Activated CD4-positive, alpha-beta T cell treated with anti-CD3 and anti-CD28 coated beads for 36 hours (primary cell): ENCODE measurements at regions of chr22 and their contacts with region 1.

Region 1: DNA sequence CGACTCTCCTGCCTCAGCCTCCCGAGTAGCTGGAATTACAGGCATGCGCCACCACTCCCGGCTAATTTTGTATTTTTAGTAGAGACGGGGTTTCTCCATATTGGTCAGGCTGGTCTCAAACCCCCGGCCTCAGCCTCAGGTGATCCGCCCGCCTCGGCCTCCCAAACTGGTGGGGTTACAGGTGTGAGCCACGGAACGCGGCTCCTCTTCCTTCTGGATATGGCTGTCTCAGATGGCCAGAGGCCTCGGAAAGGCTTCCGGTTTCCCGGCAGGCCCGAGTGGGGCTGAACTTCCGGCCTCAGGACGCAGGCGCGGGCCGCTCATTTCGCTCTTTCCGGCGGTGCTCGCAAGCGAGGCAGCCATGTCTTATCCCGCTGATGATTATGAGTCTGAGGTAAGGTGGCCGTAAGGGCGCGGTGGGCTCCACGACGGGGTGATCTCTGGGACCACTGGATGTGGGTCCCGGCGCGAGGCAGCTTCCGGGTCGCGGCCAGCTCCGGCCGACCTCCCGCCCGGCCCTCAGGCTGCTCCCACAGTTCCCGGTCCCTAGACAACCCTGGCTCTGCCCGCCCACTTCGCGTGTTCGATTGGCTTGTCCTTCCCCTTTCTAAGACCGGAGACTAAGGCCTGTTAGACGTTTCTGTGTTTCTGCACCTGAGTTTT is at the start of gene EIF3L:
- DNase-seq: peak; percentile 94
- ATAC-seq: peak; percentile 74
- H3K4me3 Mint-ChIP-seq: peak within 1 kb of the TSS; percentile 90
- H3K27ac Mint-ChIP-seq: peak within 1 kb of the TSS; percentile 96
- H3K4me1 Mint-ChIP-seq: peaks cover 47% of the 10 kb centered on the region
- H3K27me3 Mint-ChIP-seq: no peaks in the 10 kb centered on the region
- total RNA-seq, gene EIF3L: 632 to 670 TPM

Region 2: GRCh38 chr22:37486224-37486845 is 362.9 kb before region 1 on chr22 and contains the start of gene MFNG:
- CTCF ChIA-PET with region 1: no interaction called
- POLR2A ChIA-PET with region 1: no interaction called
- intact Hi-C with region 1: loop called in 1 of 2 experiments (anchors 2 kb)
- DNase-seq: peak; percentile 89
- ATAC-seq: peak; percentile 70
- H3K4me3 Mint-ChIP-seq: peak within 1 kb of the TSS; percentile 92
- H3K27ac Mint-ChIP-seq: peak within 1 kb of the TSS; percentile 92
- H3K4me1 Mint-ChIP-seq: peaks cover 64% of the 10 kb centered on the region
- H3K27me3 Mint-ChIP-seq: no peaks in the 10 kb centered on the region
- total RNA-seq, gene MFNG: 108 to 125 TPM

Region 3: DNA sequence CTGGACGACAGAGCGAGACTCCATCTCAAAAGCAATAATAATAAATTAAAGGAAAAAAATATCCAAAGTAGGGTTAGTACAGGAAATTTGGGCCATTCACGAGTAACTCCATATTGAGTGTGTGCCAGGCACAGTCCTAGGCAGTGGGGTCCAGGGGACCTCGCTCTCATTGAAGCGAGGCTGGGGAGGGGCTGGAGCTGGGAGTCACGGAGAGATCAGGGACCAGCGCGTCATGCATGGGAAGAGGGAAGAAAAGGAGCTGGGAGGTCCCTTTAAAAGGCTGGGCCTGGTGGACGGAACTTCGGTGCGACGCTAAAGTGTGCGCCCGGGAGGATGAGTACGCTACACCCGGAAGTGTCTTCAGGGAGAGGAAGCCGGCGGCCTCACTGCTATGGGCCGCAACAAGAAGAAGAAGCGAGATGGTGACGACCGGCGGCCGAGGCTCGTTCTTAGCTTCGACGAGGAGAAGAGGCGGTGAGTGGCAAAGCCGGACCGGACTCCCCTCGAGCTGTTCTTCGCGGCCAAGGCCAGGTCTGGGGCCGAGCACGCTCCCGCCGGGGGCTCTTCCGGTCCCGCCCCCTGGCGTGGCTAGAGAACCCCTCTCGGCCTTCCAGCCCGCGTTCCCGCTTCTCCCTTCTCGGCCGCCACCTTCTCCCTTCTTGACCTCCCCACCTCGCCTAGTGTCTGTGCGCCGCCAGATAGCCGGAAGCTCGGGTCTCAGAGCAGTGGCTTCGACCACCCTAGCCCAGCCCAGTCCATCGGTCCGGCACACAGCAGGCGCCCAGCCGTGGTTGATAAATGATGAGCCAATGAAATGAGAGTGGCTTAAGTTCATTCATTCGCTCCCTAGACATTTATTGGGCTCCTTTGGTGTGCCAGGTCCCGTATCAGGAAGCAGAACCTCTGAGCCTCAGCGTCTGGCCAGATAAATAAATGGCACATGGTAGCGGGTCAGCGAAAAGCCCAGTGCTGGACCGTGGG is 162.9 kb before region 1 on chr22 and contains the start of gene NOL12:
- CTCF ChIA-PET with region 1: no interaction called
- POLR2A ChIA-PET with region 1: interaction called, 4 read pairs
- intact Hi-C with region 1: loop called in 1 of 2 experiments (anchors 1 kb)
- DNase-seq: peak; percentile 84
- ATAC-seq: peak; percentile 82
- H3K4me3 Mint-ChIP-seq: peak within 1 kb of the TSS; percentile 90
- H3K27ac Mint-ChIP-seq: peak within 1 kb of the TSS; percentile 98
- H3K4me1 Mint-ChIP-seq: peaks cover 27% of the 10 kb centered on the region
- H3K27me3 Mint-ChIP-seq: no peaks in the 10 kb centered on the region
- total RNA-seq, gene NOL12: 37.1 to 42.3 TPM

Region 4: GRCh38 chr22:37817705-37818408 is 31.4 kb before region 1 on chr22:
- CTCF ChIA-PET with region 1: interaction called, 7 read pairs
- POLR2A ChIA-PET with region 1: interaction called, 9 read pairs
- intact Hi-C with region 1: loop called in 1 of 2 experiments (anchors 1 kb)
- DNase-seq: peak; percentile 89
- ATAC-seq: peak; percentile 86
- H3K4me3 Mint-ChIP-seq: no peak overlapping the region
- H3K27ac Mint-ChIP-seq: no peak overlapping the region
- H3K4me1 Mint-ChIP-seq: peaks cover 8% of the 10 kb centered on the region
- H3K27me3 Mint-ChIP-seq: peaks cover 16% of the 10 kb centered on the region

Region 5: GRCh38 chr22:37953437-37954179 is 104.4 kb after region 1 on chr22 and contains the starts of genes C22orf23 and POLR2F:
- CTCF ChIA-PET with region 1: no interaction called
- POLR2A ChIA-PET with region 1: interaction called, 3 read pairs
- intact Hi-C with region 1: loop called (anchors 1 to 10 kb)
- DNase-seq: peak; percentile 98
- ATAC-seq: peak; percentile 98
- H3K4me3 Mint-ChIP-seq: peak within 1 kb of the TSS; percentile 86
- H3K27ac Mint-ChIP-seq: peak within 1 kb of the TSS; percentile 91
- H3K4me1 Mint-ChIP-seq: peaks cover 26% of the 10 kb centered on the region
- H3K27me3 Mint-ChIP-seq: peaks cover 11% of the 10 kb centered on the region
- total RNA-seq, gene C22orf23: 0.16 TPM in 1 of 2 experiments, not detected in the other
- total RNA-seq, gene POLR2F: 70.5 to 77.8 TPM

Region 6: GRCh38 chr22:38201710-38202436 is 352.7 kb after region 1 on chr22 and contains the start of gene MAFF:
- CTCF ChIA-PET with region 1: no interaction called
- POLR2A ChIA-PET with region 1: no interaction called
- intact Hi-C with region 1: loop called in 1 of 2 experiments (anchors 1 kb)
- DNase-seq: peak; percentile 97
- ATAC-seq: peak; percentile 72
- H3K4me3 Mint-ChIP-seq: peak within 1 kb of the TSS; percentile 82
- H3K27ac Mint-ChIP-seq: peak within 1 kb of the TSS; percentile 86
- H3K4me1 Mint-ChIP-seq: peaks cover 30% of the 10 kb centered on the region
- H3K27me3 Mint-ChIP-seq: no peaks in the 10 kb centered on the region
- total RNA-seq, gene MAFF: 8.3 to 9.4 TPM

Region 7: GRCh38 chr22:38506118-38506962 is 657.1 kb after region 1 on chr22 and contains the start of gene DDX17:
- CTCF ChIA-PET with region 1: no interaction called
- POLR2A ChIA-PET with region 1: no interaction called
- intact Hi-C with region 1: loop called in 1 of 2 experiments (anchors 5 kb)
- DNase-seq: peak; percentile 95
- ATAC-seq: peak; percentile 89
- H3K4me3 Mint-ChIP-seq: peak within 1 kb of the TSS; percentile 89
- H3K27ac Mint-ChIP-seq: peak within 1 kb of the TSS; percentile 100
- H3K4me1 Mint-ChIP-seq: peaks cover 36% of the 10 kb centered on the region
- H3K27me3 Mint-ChIP-seq: no peaks in the 10 kb centered on the region
- total RNA-seq, gene DDX17: 259 to 328 TPM